ENCODE measurements at regions of chr3 and their contacts with region 1.

Region 1: DNA sequence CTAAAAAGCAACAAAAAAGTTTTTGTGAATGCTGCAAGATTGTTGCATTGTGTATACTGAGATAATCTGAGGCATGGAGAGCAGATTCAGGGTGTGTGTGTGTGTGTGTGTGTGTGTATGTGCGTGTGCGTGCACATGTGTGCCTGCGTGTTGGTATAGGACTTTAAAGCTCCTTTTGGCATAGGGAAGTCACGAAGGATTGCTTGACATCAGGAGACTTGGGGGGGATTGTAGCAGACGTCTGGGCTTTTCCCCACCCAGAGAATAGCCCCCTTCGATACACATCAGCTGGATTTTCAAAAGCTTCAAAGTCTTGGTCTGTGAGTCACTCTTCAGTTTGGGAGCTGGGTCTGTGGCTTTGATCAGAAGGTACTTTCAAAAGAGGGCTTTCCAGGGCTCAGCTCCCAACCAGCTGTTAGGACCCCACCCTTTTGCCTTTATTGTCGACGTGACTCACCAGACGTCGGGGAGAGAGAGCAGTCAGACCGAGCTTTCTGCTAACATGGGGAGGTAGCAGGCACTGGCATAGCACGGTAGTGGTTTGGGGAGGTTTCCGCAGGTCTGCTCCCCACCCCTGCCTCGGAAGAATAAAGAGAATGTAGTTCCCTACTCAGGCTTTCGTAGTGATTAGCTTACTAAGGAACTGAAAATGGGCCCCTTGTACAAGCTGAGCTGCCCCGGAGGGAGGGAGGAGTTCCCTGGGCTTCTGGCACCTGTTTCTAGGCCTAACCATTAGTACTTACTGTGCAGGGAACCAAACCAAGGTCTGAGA is 4.7 kb downstream of the BHLHE40 start:
- DNase-seq: peak; percentile 62
- H3K27ac ChIP-seq: peak overlapping the region; percentile 92
- CTCF ChIP-seq: no peak

Region 2: DNA sequence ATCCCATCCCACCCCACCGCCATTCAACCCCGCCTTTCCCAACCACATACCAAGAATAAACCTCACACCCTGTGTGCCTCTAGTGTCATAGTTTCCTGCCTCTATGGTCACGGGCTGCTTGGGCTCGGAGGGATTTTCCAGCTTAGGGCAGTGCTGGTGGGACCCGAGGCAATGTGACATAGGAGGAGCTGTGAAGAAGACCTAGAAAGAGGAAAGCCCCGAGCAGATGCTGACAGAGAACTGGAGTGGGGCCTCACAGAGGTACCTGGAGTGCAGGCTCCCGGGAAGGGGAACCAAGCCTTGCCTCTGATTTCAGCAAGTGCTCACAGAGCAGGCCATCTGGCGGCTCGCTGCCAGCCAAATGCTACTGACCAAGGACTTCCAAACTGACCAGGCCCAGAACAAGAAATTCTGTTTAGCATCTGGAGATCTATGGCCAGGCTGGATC is 22.9 kb after region 1 on chr3:
- CTCF ChIA-PET with region 1: no interaction called
- POLR2A ChIA-PET with region 1: no interaction called
- DNase-seq: no peak
- H3K27ac ChIP-seq: no peak overlapping the region
- CTCF ChIP-seq: no peak

Region 3: DNA sequence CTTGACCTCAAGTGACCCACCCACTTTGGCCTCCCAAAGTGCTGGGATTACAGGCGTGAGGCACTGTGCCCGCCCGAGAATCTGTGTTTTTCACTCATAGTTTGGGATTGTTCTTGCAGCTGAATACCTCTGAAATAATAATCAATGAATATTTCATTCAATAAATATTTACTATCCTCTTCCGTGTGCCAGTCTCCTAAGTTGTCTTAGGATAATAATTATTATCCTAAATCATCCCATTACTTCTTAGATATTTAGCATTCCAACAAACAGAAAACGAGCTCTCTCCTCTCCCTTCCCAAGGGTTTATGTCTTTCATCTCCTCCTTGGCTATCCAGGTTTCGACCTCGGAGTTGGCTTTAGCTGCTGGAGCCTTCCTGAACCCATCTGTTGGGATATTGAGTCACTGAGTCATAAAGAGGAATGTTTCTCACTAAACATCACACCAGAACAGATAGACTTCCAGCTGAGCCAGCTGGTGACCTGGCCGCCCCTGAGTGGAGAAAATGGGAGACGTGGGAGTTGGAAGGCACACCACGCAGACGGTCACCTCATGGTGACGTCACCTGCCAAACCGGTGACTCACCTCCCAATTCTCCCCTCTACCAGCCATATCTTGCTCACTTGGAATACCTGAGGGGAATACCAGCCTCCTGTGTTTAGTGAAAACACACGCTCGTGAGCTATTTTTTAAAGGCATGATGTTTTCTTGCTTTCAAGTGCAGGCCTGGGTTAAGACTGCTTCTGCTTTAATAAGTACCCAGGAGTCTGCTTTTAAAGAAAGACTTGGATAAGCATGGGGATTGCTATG is 39.2 kb after region 1 on chr3:
- CTCF ChIA-PET with region 1: interaction called, 7 read pairs
- POLR2A ChIA-PET with region 1: interaction called, 19 read pairs
- DNase-seq: peak; percentile 88
- H3K27ac ChIP-seq: peak overlapping the region; percentile 90
- CTCF ChIP-seq: no peak

Measured in RWPE1 (cell line).